Mammary epithelial cell (primary cell): ENCODE measurements at regions of chr4 and their contacts with region 1.

Region 1: GRCh38 chr4:87006676-87007527 is 72.1 kb downstream of the AFF1 start:
- DNase-seq: peak; percentile 93
- H3K4me3 ChIP-seq: peak overlapping the region; percentile 65 to 85 (median 81)
- H3K27ac ChIP-seq: peak overlapping the region; percentile 77
- H3K4me1 ChIP-seq: peaks cover 40% of the 10 kb centered on the region
- H3K27me3 ChIP-seq: no peaks in the 10 kb centered on the region
- CTCF ChIP-seq: peak in 1 of 2 donors; percentile 16

Region 2: GRCh38 chr4:86921608-86922252 is 85.2 kb before region 1 on chr4:
- CTCF ChIA-PET with region 1: no interaction called
- dilution Hi-C with region 1: loop called (anchors 5 kb)
- in situ Hi-C with region 1: loop called in 1 of 2 experiments (anchors 5 kb)
- intact Hi-C with region 1: loop called (anchors 1 kb)
- DNase-seq: peak; percentile 68
- H3K4me3 ChIP-seq: no peak overlapping the region
- H3K27ac ChIP-seq: peak overlapping the region; percentile 92
- H3K4me1 ChIP-seq: peaks cover 55% of the 10 kb centered on the region
- H3K27me3 ChIP-seq: no peaks in the 10 kb centered on the region
- CTCF ChIP-seq: no peak

Region 3: GRCh38 chr4:86934771-86935565 is 71.9 kb before region 1 on chr4 and contains the start of gene AFF1:
- CTCF ChIA-PET with region 1: no interaction called
- dilution Hi-C with region 1: no loop called
- in situ Hi-C with region 1: no loop called
- intact Hi-C with region 1: loop called (anchors 1 kb)
- DNase-seq: peak; percentile 90
- H3K4me3 ChIP-seq: peak within 1 kb of the TSS; percentile 81 to 99 (median 91)
- H3K27ac ChIP-seq: peak within 1 kb of the TSS; percentile 97
- H3K4me1 ChIP-seq: peaks cover 22% of the 10 kb centered on the region
- H3K27me3 ChIP-seq: no peaks in the 10 kb centered on the region
- CTCF ChIP-seq: peak in 1 of 2 donors; percentile 41
- total RNA-seq, gene AFF1: 24.8 to 48.3 TPM

Region 4: GRCh38 chr4:87038837-87039615 is 32.1 kb after region 1 on chr4:
- CTCF ChIA-PET with region 1: no interaction called
- dilution Hi-C with region 1: no loop called
- in situ Hi-C with region 1: no loop called
- intact Hi-C with region 1: loop called (anchors 2 kb)
- DNase-seq: peak; percentile 89
- H3K4me3 ChIP-seq: peak overlapping the region in 1 of 3 experiments; percentile 2
- H3K27ac ChIP-seq: peak overlapping the region; percentile 89
- H3K4me1 ChIP-seq: peaks cover 42% of the 10 kb centered on the region
- H3K27me3 ChIP-seq: no peaks in the 10 kb centered on the region
- CTCF ChIP-seq: no peak

Region 5: GRCh38 chr4:87078987-87079486 is 72.1 kb after region 1 on chr4:
- CTCF ChIA-PET with region 1: interaction called, 3 read pairs
- dilution Hi-C with region 1: no loop called
- in situ Hi-C with region 1: no loop called
- intact Hi-C with region 1: loop called (anchors 5 kb)
- DNase-seq: no peak
- H3K4me3 ChIP-seq: no peak overlapping the region
- H3K27ac ChIP-seq: peak overlapping the region; percentile 57
- H3K4me1 ChIP-seq: peaks cover 21% of the 10 kb centered on the region
- H3K27me3 ChIP-seq: no peaks in the 10 kb centered on the region
- CTCF ChIP-seq: no peak

Region 6: GRCh38 chr4:87120411-87121199 is 113.7 kb after region 1 on chr4:
- CTCF ChIA-PET with region 1: no interaction called
- dilution Hi-C with region 1: no loop called
- in situ Hi-C with region 1: no loop called
- intact Hi-C with region 1: loop called (anchors 1 kb)
- DNase-seq: peak; percentile 97
- H3K4me3 ChIP-seq: peak overlapping the region; percentile 13 to 42 (median 40)
- H3K27ac ChIP-seq: peak overlapping the region; percentile 96
- H3K4me1 ChIP-seq: peaks cover 40% of the 10 kb centered on the region
- H3K27me3 ChIP-seq: no peaks in the 10 kb centered on the region
- CTCF ChIP-seq: peak in 1 of 2 donors; percentile 42

Region 7: GRCh38 chr4:87377816-87378215 is 370.9 kb after region 1 on chr4:
- CTCF ChIA-PET with region 1: no interaction called
- dilution Hi-C with region 1: no loop called
- in situ Hi-C with region 1: no loop called
- intact Hi-C with region 1: no loop called
- DNase-seq: no peak
- H3K4me3 ChIP-seq: no peak overlapping the region
- H3K27ac ChIP-seq: no peak overlapping the region
- H3K4me1 ChIP-seq: no peaks in the 10 kb centered on the region
- H3K27me3 ChIP-seq: no peaks in the 10 kb centered on the region
- CTCF ChIP-seq: no peak